HAP-1 (cell line): ENCODE measurements at regions of chr14 and their contacts with region 1.

Region 1: DNA sequence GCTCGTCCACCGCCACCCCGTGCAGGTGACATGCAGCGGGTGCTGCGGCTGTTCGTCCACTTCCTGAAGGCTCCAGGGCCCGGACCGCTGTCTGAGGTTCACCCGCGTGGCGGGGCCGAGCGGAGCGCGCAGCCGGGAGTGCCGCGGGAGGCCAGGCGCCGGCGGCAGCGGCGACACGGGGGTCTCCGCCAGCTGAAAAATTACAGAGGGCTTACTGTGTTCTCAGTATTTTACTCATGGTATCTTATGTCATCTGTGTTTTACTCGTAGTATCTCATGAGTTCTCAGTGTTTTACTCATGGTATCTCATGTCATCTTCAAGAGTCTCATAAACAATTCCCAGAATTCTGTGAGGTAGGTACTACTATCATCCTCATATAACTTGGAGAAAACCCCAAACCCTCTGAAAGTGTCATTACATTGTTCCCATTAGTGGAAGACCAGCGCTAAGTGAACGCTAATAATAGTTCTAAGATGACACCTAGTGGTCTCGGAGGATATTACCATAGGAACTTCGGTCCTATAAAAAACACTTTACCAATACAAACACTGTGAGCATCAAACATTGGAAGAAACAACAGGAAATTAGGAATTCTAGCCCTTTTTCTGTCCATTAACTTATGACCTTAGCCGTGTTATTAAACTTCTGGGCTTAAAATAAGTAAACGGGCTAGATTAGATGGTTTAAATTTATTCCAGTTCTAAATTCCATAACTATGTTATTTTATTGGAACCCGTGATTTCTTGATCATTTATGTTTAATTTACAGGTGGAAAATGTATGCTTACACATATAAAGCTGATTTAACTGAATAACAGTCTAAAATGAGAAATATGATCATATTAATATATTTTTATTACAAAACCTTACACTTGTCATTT is 32.4 kb downstream of the AK7 start:
- DNase-seq: peak; percentile 49 to 81
- H3K4me3 ChIP-seq: no peak overlapping the region
- H3K4me1 ChIP-seq: no peaks in the 10 kb centered on the region
- H3K27me3 ChIP-seq: no peaks in the 10 kb centered on the region

Region 2: DNA sequence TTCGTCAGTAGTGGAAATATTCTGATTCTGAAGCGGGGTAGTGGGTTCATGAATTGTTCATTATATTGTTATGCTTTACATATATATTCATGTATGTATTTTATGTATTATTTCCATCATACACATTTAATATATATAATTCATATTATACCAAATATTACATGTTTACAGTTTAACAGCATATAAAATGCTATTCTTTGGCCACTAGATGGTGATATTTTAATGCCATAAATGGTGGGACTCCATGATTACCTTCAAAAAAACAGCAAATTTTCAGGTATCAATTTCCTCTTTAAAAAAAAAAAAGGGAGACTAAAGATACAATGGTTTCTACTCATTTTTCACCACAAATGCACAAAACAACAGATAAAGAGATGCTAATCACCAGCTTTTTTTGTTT is 127.3 kb before region 1 on chr14:
- in situ Hi-C with region 1: loop called (anchors 5 kb)
- DNase-seq: peak in 1 of 2 experiments; percentile 8
- H3K4me3 ChIP-seq: no peak overlapping the region
- H3K4me1 ChIP-seq: no peaks in the 10 kb centered on the region
- H3K27me3 ChIP-seq: no peaks in the 10 kb centered on the region